ENCODE measurements at regions of chr5 and their contacts with region 1.

Region 1: GRCh38 chr5:150217873-150218692 is 28.2 kb downstream of the SLC6A7 start:
- DNase-seq: peak; percentile 79 to 87
- ATAC-seq: peak; percentile 80 to 91 (median 84)
- H3K4me3 ChIP-seq: no peak overlapping the region
- H3K27ac ChIP-seq: no peak overlapping the region
- H3K4me1 ChIP-seq: peaks cover 0 to 49% (median 29%) of the 10 kb centered on the region in 9 donors
- H3K27me3 ChIP-seq: no peaks in the 10 kb centered on the region
- CTCF ChIP-seq: peak; percentile 89 to 97 (median 95)

Region 2: DNA sequence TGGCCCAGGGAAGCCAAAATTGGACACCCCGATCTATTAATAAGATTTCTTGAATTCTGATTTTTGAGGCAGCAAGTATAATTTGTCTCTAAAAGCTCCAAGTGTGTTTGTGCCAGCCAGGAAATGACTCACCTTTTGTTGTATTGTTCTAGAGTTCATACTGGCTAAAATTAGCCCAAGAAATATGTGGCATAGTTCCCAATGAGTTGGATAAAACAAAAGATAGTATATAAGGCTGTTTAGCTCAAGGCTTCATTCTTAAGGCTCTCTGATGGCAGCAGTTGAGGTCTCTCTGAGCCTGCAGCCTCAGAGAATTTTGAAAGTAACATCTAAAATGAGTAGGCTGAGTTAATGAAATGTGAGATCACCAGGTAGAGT is 195.9 kb before region 1 on chr5:
- intact Hi-C with region 1: loop called in 3 of 10 experiments (anchors 5 to 10 kb)
- DNase-seq: peak in 1 of 2 donors; percentile 61
- ATAC-seq: peak; percentile 65 to 89 (median 78)
- H3K4me3 ChIP-seq: peak overlapping the region in 2 of 10 donors; percentile 28 to 30
- H3K27ac ChIP-seq: peak overlapping the region; percentile 7 to 83 (median 70)
- H3K4me1 ChIP-seq: peaks cover 5 to 62% (median 53%) of the 10 kb centered on the region in 9 donors
- H3K27me3 ChIP-seq: no peaks in the 10 kb centered on the region
- CTCF ChIP-seq: no peak

Region 3: GRCh38 chr5:150036513-150036912 is 181.6 kb before region 1 on chr5:
- intact Hi-C with region 1: loop called in 6 of 10 experiments (anchors 10 kb)
- DNase-seq: peak in 1 of 2 donors; percentile 36
- ATAC-seq: peak; percentile 70 to 95 (median 80)
- H3K4me3 ChIP-seq: no peak overlapping the region
- H3K27ac ChIP-seq: peak overlapping the region in 3 of 10 donors; percentile 23 to 56 (median 40)
- H3K4me1 ChIP-seq: peaks cover 0 to 21% (median 10%) of the 10 kb centered on the region in 9 donors
- H3K27me3 ChIP-seq: no peaks in the 10 kb centered on the region
- CTCF ChIP-seq: no peak

Region 4: GRCh38 chr5:150044329-150044681 is 173.8 kb before region 1 on chr5:
- intact Hi-C with region 1: loop called in 6 of 10 experiments (anchors 10 kb)
- DNase-seq: peak in 1 of 2 donors; percentile 35
- ATAC-seq: peak in 5 of 8 donors; percentile 5 to 29 (median 19)
- H3K4me3 ChIP-seq: no peak overlapping the region
- H3K27ac ChIP-seq: peak overlapping the region in 7 of 10 donors; percentile 18 to 72 (median 61)
- H3K4me1 ChIP-seq: peaks cover 0 to 46% (median 34%) of the 10 kb centered on the region in 9 donors
- H3K27me3 ChIP-seq: no peaks in the 10 kb centered on the region
- CTCF ChIP-seq: no peak

Region 5: GRCh38 chr5:150129813-150130492 is 88.1 kb before region 1 on chr5:
- intact Hi-C with region 1: loop called (anchors 1 to 5 kb)
- DNase-seq: peak; percentile 71 to 76
- ATAC-seq: peak; percentile 35 to 81 (median 79)
- H3K4me3 ChIP-seq: peak overlapping the region in 4 of 10 donors; percentile 9 to 30 (median 26)
- H3K27ac ChIP-seq: peak overlapping the region in 6 of 10 donors; percentile 16 to 92 (median 34)
- H3K4me1 ChIP-seq: peaks cover 2 to 49% (median 33%) of the 10 kb centered on the region in 9 donors
- H3K27me3 ChIP-seq: no peaks in the 10 kb centered on the region
- CTCF ChIP-seq: peak; percentile 86 to 97 (median 94)

Region 6: GRCh38 chr5:150161242-150162141 is 56.6 kb before region 1 on chr5:
- intact Hi-C with region 1: loop called (anchors 1 to 5 kb)
- DNase-seq: peak; percentile 85 to 91
- ATAC-seq: peak; percentile 24 to 66 (median 55)
- H3K4me3 ChIP-seq: no peak overlapping the region
- H3K27ac ChIP-seq: peak overlapping the region in 9 of 10 donors; percentile 73 to 92 (median 86)
- H3K4me1 ChIP-seq: peaks cover 16 to 89% (median 67%) of the 10 kb centered on the region in 9 donors
- H3K27me3 ChIP-seq: peaks cover 0 to 12% (median 4%) of the 10 kb centered on the region in 7 donors
- CTCF ChIP-seq: peak; percentile 75 to 95 (median 90)

Region 7: GRCh38 chr5:150245111-150245789 is 27.2 kb after region 1 on chr5:
- intact Hi-C with region 1: no loop called
- DNase-seq: peak; percentile 73 to 79
- ATAC-seq: peak; percentile 91 to 97 (median 95)
- H3K4me3 ChIP-seq: peak overlapping the region in 9 of 10 donors; percentile 11 to 45 (median 32)
- H3K27ac ChIP-seq: peak overlapping the region in 8 of 10 donors; percentile 16 to 77 (median 62)
- H3K4me1 ChIP-seq: peaks cover 0 to 38% (median 8%) of the 10 kb centered on the region in 9 donors
- H3K27me3 ChIP-seq: no peaks in the 10 kb centered on the region
- CTCF ChIP-seq: no peak